ENCODE measurements at regions of chr4 and their contacts with region 1.

Region 1: GRCh38 chr4:81326581-81326980 is 111.6 kb upstream of the PRKG2 start:
- DNase-seq: no peak
- ATAC-seq: no peak

Region 2: GRCh38 chr4:81272671-81273070 is 53.9 kb before region 1 on chr4:
- intact Hi-C with region 1: loop called (anchors 5 kb)
- DNase-seq: no peak
- ATAC-seq: no peak

Measured in sciatic nerve (tissue), 2 donors.